RWPE1 (cell line): ENCODE measurements at regions of chr18 and their contacts with region 1.

Region 1: DNA sequence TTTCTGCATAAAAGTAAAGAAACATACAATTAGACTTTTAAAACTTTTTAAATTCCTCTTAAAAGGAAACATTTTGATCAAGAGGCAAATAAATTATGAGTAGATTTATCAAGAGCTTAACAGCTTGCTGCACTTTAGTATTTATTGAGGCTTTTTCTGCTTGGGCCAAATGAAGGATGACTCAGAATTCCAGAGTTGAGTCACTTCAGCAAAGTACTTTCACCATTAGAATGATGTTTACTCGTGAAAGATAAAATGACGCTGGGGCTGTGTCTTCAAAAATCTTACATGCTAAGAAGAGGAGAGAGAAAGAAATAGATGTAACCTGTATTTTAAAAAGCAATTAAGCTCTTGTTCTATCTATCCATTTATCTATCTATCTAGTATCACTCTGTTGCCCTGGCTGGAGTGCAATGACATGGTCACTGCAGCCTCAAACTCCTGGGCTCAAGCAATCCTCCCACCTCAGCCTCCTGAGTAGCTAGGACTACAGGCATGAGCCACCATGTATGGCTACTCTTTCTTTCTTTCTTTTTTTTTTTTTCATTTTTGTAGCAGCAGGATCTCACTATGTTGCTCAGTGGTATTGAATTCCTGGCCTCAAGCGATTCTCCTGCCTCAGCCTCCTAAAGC is 75.3 kb upstream of the RIOK3 start:
- DNase-seq: peak; percentile 63
- H3K27ac ChIP-seq: peak overlapping the region; percentile 78
- CTCF ChIP-seq: no peak

Region 2: DNA sequence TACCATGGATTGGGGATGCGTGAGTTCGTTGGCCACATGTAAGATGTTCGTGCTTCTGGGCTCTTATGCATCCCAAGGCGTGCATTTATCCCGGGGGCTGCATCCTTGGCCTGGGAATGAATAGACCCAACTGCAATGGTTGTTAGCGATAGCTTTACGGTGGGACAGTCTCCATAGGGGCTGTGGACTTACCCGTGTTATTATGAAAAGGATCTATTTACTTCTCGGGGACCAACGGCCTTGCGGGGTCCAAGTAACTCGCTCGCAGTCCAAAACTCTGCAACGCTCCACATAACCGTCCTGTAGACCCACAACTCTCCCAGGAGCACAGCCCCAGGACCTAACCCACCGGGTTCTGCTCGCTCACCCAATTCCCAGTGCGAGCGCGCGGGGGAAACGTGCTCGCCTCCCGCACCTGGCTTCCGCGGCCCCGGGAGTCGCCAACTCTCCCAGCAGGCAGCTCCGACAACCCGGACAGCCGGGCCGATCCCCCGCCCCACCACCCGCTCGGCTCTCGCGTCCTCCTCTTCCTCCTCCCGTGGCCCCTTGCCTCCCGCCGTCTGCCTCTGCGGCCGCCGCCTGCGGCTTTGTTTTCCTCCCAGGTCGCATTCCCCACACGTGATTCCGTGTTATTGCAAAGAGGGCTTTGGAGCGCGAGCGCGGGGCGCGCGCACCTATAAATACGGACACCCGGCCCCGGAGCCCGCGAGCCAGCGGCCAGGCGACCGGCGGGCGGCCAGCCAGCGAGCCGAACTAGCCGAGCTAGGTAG is 242.8 kb before region 1 on chr18 and contains the start of gene CABLES1:
- CTCF ChIA-PET with region 1: interaction called, 11 read pairs
- POLR2A ChIA-PET with region 1: no interaction called
- DNase-seq: peak; percentile 21
- H3K27ac ChIP-seq: peak within 1 kb of the TSS; percentile 68
- CTCF ChIP-seq: no peak